ENCODE measurements at regions of chr1 and their contacts with region 1.

Region 1: GRCh38 chr1:153698020-153698931 is 19.8 kb downstream of the NPR1 start:
- DNase-seq: peak; percentile 96
- H3K4me3 ChIP-seq: no peak overlapping the region
- H3K27ac ChIP-seq: peak overlapping the region; percentile 90
- H3K4me1 ChIP-seq: peaks cover 26% of the 10 kb centered on the region
- H3K27me3 ChIP-seq: no peaks in the 10 kb centered on the region
- CTCF ChIP-seq: no peak
- POLR2A ChIP-seq: no peak

Region 2: DNA sequence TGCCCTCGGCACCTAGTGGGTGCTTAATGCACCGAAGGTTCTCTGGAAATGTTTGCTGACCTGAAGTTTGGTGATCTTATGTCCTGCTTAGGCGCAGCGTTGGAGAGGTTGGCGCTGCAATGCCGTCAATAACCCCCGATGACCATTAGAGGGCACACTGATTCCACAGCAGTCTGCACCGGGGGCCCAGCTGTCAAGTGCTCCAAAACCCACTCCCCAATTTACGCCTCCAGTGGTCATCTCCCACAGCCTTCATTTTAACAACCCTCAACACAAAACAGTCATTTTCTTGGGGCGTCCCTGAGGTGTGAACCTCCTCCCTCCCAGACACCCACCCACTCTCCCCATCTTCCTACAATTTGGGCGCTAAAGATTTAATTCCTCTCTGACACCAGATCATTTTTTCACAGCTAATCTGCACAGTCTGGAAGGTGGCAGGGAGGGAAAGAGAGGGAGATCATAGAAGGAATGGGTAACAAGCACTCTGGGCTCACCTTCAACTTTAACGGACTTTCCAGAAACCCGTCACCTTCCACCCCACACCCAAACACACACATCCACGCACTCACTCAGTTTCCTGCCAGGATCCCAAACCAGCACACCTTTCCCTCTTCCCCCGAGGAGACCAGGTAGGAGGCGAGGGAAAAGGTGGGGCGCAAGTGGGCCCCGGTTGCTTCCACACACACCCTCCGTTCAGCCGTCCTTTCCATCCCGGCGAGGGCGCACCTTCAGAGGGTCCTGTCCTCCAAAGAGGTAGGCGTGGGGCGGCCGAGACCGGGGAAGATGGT is 20.4 kb before region 1 on chr1:
- CTCF ChIA-PET with region 1: interaction called, 5 read pairs
- POLR2A ChIA-PET with region 1: interaction called, 3 read pairs
- dilution Hi-C with region 1: no loop called
- intact Hi-C with region 1: loop called (anchors 1 kb)
- DNase-seq: peak; percentile 72
- H3K4me3 ChIP-seq: peak overlapping the region; percentile 15 to 44 (median 22)
- H3K27ac ChIP-seq: no peak overlapping the region
- H3K4me1 ChIP-seq: peaks cover 11% of the 10 kb centered on the region
- H3K27me3 ChIP-seq: peaks cover 4 to 5% of the 10 kb centered on the region in 2 experiments
- CTCF ChIP-seq: peak; percentile 91 to 92
- POLR2A ChIP-seq: no peak

Region 3: DNA sequence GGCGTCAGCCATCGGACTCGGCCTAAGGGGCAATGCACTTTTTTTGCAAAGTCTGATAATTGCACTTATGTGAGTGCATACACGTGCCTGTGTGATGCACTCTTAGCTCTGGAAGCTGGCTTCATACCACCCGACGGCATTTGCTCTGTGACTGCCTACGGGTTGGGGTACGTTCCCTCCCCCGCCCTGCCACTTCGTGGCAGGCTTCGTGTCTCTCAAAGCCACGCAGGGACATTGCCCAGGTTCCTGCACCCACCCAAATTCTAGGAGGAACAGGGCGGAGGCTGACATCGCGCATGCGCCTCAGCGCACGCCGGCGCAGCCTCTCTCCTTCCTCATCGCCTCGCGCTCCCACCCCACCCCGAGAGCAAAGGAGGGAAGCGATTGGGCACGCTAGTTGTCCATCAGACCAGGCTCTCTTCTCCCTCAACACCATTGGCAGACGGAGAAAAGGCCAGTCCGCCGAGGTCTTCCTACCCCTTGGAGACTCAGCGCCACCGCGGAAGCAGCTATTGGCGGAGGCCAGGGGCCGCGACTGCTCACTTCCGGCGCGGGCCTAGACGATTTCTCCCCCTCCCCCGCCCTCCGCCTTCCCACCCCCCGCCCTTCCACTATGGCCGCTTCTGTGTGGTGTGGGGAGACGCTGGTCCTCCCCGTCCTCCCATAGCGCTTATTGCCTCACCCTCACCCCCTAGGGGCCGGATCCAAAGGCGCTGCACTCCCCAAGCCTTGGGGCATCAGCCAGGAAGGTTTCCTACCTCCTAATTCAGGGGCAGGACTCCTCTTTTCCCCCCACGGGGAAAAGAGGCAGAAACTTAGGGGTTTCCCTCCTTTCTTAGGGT is 29.4 kb after region 1 on chr1 and contains the start of gene INTS3:
- CTCF ChIA-PET with region 1: interaction called, 4 read pairs
- POLR2A ChIA-PET with region 1: interaction called, 3 read pairs
- dilution Hi-C with region 1: no loop called
- intact Hi-C with region 1: loop called (anchors 1 kb)
- DNase-seq: peak; percentile 100
- H3K4me3 ChIP-seq: peak within 1 kb of the TSS; percentile 57 to 68 (median 59)
- H3K27ac ChIP-seq: peak within 1 kb of the TSS; percentile 77
- H3K4me1 ChIP-seq: peaks cover 18% of the 10 kb centered on the region
- H3K27me3 ChIP-seq: no peaks in the 10 kb centered on the region
- CTCF ChIP-seq: no peak
- POLR2A ChIP-seq: peak; percentile 82
- total RNA-seq, gene INTS3: 56.1 and 63.1 TPM in 2 replicates

Region 4: DNA sequence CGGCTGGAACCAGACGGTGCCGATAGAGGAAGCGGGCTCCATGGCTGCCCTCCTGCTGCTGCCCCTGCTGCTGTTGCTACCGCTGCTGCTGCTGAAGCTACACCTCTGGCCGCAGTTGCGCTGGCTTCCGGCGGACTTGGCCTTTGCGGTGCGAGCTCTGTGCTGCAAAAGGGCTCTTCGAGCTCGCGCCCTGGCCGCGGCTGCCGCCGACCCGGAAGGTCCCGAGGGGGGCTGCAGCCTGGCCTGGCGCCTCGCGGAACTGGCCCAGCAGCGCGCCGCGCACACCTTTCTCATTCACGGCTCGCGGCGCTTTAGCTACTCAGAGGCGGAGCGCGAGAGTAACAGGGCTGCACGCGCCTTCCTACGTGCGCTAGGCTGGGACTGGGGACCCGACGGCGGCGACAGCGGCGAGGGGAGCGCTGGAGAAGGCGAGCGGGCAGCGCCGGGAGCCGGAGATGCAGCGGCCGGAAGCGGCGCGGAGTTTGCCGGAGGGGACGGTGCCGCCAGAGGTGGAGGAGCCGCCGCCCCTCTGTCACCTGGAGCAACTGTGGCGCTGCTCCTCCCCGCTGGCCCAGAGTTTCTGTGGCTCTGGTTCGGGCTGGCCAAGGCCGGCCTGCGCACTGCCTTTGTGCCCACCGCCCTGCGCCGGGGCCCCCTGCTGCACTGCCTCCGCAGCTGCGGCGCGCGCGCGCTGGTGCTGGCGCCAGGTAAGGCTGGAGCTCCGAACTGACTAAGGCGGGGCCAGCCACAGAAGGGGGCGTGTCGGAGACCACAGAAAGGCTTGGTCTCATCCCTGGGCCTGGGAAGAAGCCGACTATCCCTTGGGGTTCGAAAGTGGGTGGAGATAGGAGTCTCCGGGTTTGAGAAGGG is 77.4 kb after region 1 on chr1:
- CTCF ChIA-PET with region 1: interaction called, 6 read pairs
- POLR2A ChIA-PET with region 1: interaction called, 3 read pairs
- dilution Hi-C with region 1: no loop called
- intact Hi-C with region 1: loop called (anchors 1 kb)
- DNase-seq: peak; percentile 58
- H3K4me3 ChIP-seq: peak overlapping the region; percentile 25 to 63 (median 49)
- H3K27ac ChIP-seq: no peak overlapping the region
- H3K4me1 ChIP-seq: peaks cover 54% of the 10 kb centered on the region
- H3K27me3 ChIP-seq: no peaks in the 10 kb centered on the region
- CTCF ChIP-seq: no peak
- POLR2A ChIP-seq: no peak

Region 5: GRCh38 chr1:153783233-153784190 is 85.2 kb after region 1 on chr1:
- CTCF ChIA-PET with region 1: no interaction called
- POLR2A ChIA-PET with region 1: no interaction called
- dilution Hi-C with region 1: no loop called
- intact Hi-C with region 1: loop called (anchors 1 kb)
- DNase-seq: peak; percentile 94
- H3K4me3 ChIP-seq: peak overlapping the region; percentile 47 to 62 (median 55)
- H3K27ac ChIP-seq: peak overlapping the region; percentile 73
- H3K4me1 ChIP-seq: peaks cover 15% of the 10 kb centered on the region
- H3K27me3 ChIP-seq: peaks cover 0 to 2% of the 10 kb centered on the region in 2 experiments
- CTCF ChIP-seq: peak in 1 of 2 donors; percentile 12
- POLR2A ChIP-seq: peak; percentile 92

Region 6: GRCh38 chr1:154272217-154272998 is 574.1 kb after region 1 on chr1 and contains the start of gene HAX1:
- CTCF ChIA-PET with region 1: no interaction called
- POLR2A ChIA-PET with region 1: no interaction called
- dilution Hi-C with region 1: no loop called
- intact Hi-C with region 1: loop called (anchors 5 kb)
- DNase-seq: peak; percentile 97
- H3K4me3 ChIP-seq: peak within 1 kb of the TSS; percentile 79 to 91 (median 81)
- H3K27ac ChIP-seq: peak within 1 kb of the TSS; percentile 69
- H3K4me1 ChIP-seq: peaks cover 15% of the 10 kb centered on the region
- H3K27me3 ChIP-seq: no peaks in the 10 kb centered on the region
- CTCF ChIP-seq: peak; percentile 81
- POLR2A ChIP-seq: peak; percentile 71
- total RNA-seq, gene HAX1: 69.1 and 78.4 TPM in 2 replicates